Posterior vena cava (tissue), 2 donors: ENCODE measurements at regions of chr1 and their contacts with region 1.

Region 1: GRCh38 chr1:183915625-183916510 is 110.9 kb downstream of the RGL1 start:
- DNase-seq: peak; percentile 86

Region 2: DNA sequence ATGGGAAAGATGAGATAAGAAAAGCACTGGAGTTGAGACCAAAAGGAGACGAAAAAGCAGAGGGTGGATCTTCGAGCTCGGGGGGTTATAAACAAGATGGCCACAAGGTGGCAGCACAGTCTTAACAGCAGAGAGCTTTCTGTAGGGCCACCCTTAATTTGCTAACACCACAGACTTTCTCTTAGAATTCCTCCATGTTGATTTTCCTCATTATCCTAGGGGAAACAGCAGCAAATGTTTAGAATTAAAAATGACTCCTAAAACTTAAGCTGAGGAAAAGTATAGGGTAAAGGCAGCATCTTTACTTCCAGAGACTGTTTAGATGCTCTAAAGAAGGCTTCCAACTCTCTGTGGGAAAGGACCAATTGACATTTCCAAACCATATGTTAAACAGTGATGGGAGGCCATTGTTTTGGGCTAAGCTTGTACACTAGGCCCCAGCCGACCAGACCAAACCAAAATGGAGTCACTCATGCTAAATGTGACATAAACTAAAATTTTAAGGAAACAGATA is 260.2 kb before region 1 on chr1:
- intact Hi-C with region 1: loop called (anchors 5 kb)
- DNase-seq: peak; percentile 92

Region 3: DNA sequence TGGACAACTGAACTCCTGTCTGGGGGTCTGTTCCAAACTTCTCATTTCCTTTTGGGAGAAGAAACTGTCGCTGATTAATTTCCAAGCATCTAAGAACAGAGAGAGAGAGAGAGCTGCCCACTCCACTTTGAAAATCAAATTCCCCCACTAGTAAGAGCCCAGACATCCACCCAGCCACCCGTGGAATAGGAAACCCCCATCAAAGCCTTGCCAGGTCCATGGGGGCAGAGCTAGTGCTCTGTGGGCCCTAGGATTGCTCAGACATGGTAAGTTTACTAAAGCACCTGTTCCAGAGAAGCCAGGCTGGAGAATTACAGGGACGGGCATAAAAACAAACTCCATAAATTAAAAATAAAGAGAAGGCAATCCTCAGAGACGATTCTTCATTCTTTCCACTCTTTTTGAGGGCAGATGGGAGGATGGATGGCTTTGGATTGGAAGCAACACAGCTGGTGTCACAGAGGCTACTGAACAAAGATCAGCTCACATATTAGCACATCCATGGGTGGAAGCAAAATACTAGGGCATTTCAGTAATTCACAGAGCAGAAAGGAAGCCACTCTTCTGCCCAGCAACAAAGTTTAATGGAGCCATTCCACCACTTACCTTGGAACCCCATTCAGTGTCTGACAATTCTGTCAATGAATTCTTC is 17.8 kb after region 1 on chr1:
- intact Hi-C with region 1: no loop called
- DNase-seq: no peak